Activated CD4-positive, alpha-beta T cell treated with anti-CD3 and anti-CD28 coated beads for 36 hours (primary cell): ENCODE measurements at regions of chr1 and their contacts with region 1.

Region 1: DNA sequence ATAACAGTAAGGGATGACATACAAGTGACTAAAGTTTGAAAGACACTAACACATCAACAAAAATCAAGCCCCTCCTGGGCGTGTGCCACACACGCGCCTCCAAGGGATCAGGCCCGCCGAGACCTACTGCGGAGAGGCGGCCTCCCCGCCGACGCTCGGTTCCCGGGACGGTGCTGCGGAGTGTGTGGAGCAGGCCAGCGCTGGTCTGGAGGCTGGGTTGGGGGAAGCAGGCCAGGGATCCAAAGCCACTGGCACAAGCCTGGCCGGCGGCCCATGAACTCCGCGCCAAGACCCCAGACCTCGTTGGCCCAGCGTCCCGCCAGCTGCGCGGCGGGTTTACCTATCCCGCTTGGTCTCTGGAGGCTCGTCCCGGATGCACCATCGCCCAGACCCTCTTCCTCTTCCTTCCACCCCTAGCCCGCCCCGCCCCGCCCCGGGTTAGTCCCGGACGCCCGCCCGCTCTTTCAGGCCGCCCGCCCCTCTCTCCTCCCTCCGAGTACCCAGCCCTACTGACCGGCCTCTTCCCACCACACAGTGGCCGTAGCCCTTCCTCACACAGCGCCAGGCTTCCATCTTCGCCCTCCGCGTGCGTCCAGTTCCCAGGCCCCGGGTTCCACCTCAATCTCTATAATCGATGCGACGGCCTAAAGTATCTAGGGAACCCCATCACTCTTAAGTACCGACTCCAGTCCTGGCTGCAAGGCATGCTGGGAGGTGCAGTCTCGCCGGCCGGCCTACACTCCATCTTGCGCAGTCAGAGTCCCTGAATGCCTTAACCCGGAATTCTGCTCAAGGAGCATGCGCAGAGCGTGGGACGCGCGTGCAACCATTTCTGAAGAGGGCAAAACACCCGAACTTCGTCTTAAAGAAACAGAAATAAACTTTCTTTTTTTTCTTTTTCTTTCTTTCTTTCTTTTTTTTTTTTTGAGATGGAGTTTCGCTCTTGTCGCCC is at the start of gene ANGEL2:
- DNase-seq: peak; percentile 97
- ATAC-seq: peak; percentile 99
- H3K4me3 Mint-ChIP-seq: peak within 1 kb of the TSS; percentile 100
- H3K27ac Mint-ChIP-seq: peak within 1 kb of the TSS; percentile 100
- H3K4me1 Mint-ChIP-seq: peaks cover 30% of the 10 kb centered on the region
- H3K27me3 Mint-ChIP-seq: no peaks in the 10 kb centered on the region
- total RNA-seq, gene ANGEL2: 41.3 to 51.5 TPM

Region 2: DNA sequence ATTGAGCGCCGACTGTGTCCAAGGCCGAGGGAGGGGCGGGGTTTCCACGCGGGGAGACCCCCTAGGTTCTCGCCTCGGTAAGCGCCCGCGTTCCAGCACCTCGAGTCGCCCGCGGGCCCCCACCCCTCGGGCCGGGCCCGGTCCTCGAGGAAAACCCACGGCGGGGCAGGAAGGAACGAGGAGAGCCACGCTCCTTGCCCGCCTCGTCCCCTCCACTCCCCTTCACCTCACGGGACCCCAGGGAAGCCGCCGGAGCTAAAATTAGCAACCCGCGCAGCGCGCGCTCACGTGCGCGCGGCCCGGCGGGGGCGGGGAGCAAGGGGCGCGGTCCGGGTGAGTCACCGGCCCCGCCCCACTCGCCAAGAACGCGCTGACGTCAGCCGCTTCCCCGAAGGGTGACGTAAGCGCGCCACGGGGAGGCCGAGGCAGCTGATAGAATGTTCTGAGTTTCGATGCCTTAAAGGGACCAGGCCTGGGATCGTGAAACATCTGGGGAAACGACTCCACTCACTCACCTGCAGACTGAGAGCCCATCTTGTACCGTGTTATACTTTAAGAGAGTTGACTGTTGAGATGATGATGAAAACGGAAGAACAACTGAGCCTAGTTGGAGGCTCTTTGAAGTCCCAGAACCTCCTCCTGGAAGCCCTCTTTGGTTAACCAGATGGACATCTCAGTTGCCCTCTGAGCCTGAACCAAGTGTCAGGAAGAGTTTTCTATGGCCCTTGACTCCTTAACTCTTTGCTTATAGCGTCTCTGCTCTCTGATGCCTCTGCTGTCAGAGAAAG is 456.5 kb before region 1 on chr1:
- CTCF ChIA-PET with region 1: no interaction called
- POLR2A ChIA-PET with region 1: no interaction called
- intact Hi-C with region 1: loop called in 1 of 2 experiments (anchors 1 kb)
- DNase-seq: peak; percentile 95
- ATAC-seq: peak; percentile 90
- H3K4me3 Mint-ChIP-seq: peak overlapping the region; percentile 61
- H3K27ac Mint-ChIP-seq: peak overlapping the region; percentile 95
- H3K4me1 Mint-ChIP-seq: peaks cover 19% of the 10 kb centered on the region
- H3K27me3 Mint-ChIP-seq: peaks cover 14% of the 10 kb centered on the region

Region 3: GRCh38 chr1:212791676-212792395 is 223.5 kb before region 1 on chr1 and contains the starts of genes NSL1 and TATDN3:
- CTCF ChIA-PET with region 1: no interaction called
- POLR2A ChIA-PET with region 1: no interaction called
- intact Hi-C with region 1: loop called (anchors 1 kb)
- DNase-seq: peak; percentile 95
- ATAC-seq: peak; percentile 89
- H3K4me3 Mint-ChIP-seq: peak within 1 kb of the TSS; percentile 99
- H3K27ac Mint-ChIP-seq: peak within 1 kb of the TSS; percentile 94
- H3K4me1 Mint-ChIP-seq: peaks cover 43% of the 10 kb centered on the region
- H3K27me3 Mint-ChIP-seq: no peaks in the 10 kb centered on the region
- total RNA-seq, gene NSL1: 39.2 to 40.9 TPM
- total RNA-seq, gene TATDN3: 13.8 to 15.2 TPM

Region 4: GRCh38 chr1:212944229-212944901 is 71.0 kb before region 1 on chr1:
- CTCF ChIA-PET with region 1: no interaction called
- POLR2A ChIA-PET with region 1: no interaction called
- intact Hi-C with region 1: no loop called
- DNase-seq: no peak
- ATAC-seq: no peak
- H3K4me3 Mint-ChIP-seq: no peak overlapping the region
- H3K27ac Mint-ChIP-seq: no peak overlapping the region
- H3K4me1 Mint-ChIP-seq: no peaks in the 10 kb centered on the region
- H3K27me3 Mint-ChIP-seq: peaks cover 8% of the 10 kb centered on the region

Region 5: GRCh38 chr1:213003256-213003655 is 12.1 kb before region 1 on chr1:
- CTCF ChIA-PET with region 1: interaction called, 8 read pairs
- POLR2A ChIA-PET with region 1: no interaction called
- intact Hi-C with region 1: loop called in 1 of 2 experiments (anchors 1 kb)
- DNase-seq: peak; percentile 47
- ATAC-seq: peak; percentile 98
- H3K4me3 Mint-ChIP-seq: no peak overlapping the region
- H3K27ac Mint-ChIP-seq: peak overlapping the region; percentile 74
- H3K4me1 Mint-ChIP-seq: peaks cover 12% of the 10 kb centered on the region
- H3K27me3 Mint-ChIP-seq: no peaks in the 10 kb centered on the region